ENCODE measurements at regions of chr12 and their contacts with region 1.

Region 1: GRCh38 chr12:12837025-12837872 is 24.1 kb downstream of the DDX47 start:
- DNase-seq: peak; percentile 37
- ATAC-seq: peak; percentile 69
- H3K4me3 ChIP-seq: no peak overlapping the region
- H3K27ac ChIP-seq: no peak overlapping the region
- H3K4me1 ChIP-seq: no peaks in the 10 kb centered on the region
- H3K27me3 ChIP-seq: no peaks in the 10 kb centered on the region
- CTCF ChIP-seq: peak; percentile 59
- EP300 ChIP-seq: no peak
- POLR2A ChIP-seq: no peak
- RAD21 ChIP-seq: no peak

Region 2: DNA sequence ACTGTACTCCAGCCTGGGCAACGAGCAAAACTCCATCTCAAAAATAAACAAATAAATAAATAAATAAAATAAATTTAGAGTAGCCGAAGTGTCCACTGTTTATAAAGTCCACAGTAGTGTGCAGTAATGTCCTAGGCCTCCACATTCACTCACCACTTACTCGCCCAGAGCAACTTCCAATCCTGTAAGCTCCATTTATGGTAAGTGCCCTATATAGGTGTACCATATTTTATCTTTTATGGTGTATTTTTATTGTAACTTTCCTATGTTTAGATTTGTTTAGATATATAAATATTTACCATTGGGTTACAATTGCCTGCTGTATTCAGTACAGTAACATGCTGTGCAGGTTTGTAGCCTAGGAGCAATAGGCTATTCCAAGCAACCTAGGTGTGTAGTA is 16.2 kb after region 1 on chr12:
- CTCF ChIA-PET with region 1: no interaction called
- POLR2A ChIA-PET with region 1: no interaction called
- in situ Hi-C with region 1: no loop called
- intact Hi-C with region 1: no loop called
- DNase-seq: no peak
- ATAC-seq: no peak
- H3K4me3 ChIP-seq: no peak overlapping the region
- H3K27ac ChIP-seq: no peak overlapping the region
- H3K4me1 ChIP-seq: no peaks in the 10 kb centered on the region
- H3K27me3 ChIP-seq: no peaks in the 10 kb centered on the region
- CTCF ChIP-seq: no peak
- EP300 ChIP-seq: no peak
- POLR2A ChIP-seq: no peak
- RAD21 ChIP-seq: no peak

Region 3: GRCh38 chr12:12872139-12872881 is 35.1 kb after region 1 on chr12:
- CTCF ChIA-PET with region 1: no interaction called
- POLR2A ChIA-PET with region 1: no interaction called
- in situ Hi-C with region 1: loop called (anchors 5 kb)
- intact Hi-C with region 1: no loop called
- DNase-seq: peak; percentile 46
- ATAC-seq: peak; percentile 54
- H3K4me3 ChIP-seq: no peak overlapping the region
- H3K27ac ChIP-seq: no peak overlapping the region
- H3K4me1 ChIP-seq: peaks cover 17% of the 10 kb centered on the region
- H3K27me3 ChIP-seq: no peaks in the 10 kb centered on the region; a peak in 1 of 5 replicates
- CTCF ChIP-seq: no peak
- EP300 ChIP-seq: no peak; a peak in 1 of 4 replicates
- POLR2A ChIP-seq: no peak
- RAD21 ChIP-seq: no peak

Region 4: GRCh38 chr12:12890815-12891645 is 53.8 kb after region 1 on chr12 and contains the start of gene GPRC5A:
- CTCF ChIA-PET with region 1: no interaction called
- POLR2A ChIA-PET with region 1: no interaction called
- in situ Hi-C with region 1: no loop called
- intact Hi-C with region 1: loop called (anchors 5 kb)
- DNase-seq: peak; percentile 30
- ATAC-seq: peak; percentile 92
- H3K4me3 ChIP-seq: peak within 1 kb of the TSS; percentile 48 to 71 (median 52)
- H3K27ac ChIP-seq: no peak within 1 kb of the TSS
- H3K4me1 ChIP-seq: peaks cover 19% of the 10 kb centered on the region; the same call in 1 of the 2 replicates
- H3K27me3 ChIP-seq: peaks cover 6 to 56% of the 10 kb centered on the region in 2 experiments; a peak in 4 of 5 replicates
- CTCF ChIP-seq: peak; percentile 61
- EP300 ChIP-seq: no peak
- POLR2A ChIP-seq: no peak
- RAD21 ChIP-seq: no peak
- total RNA-seq, gene GPRC5A: 0.24 and 0.27 TPM in 2 replicates

Region 5: GRCh38 chr12:12975322-12976077 is 138.3 kb after region 1 on chr12:
- CTCF ChIA-PET with region 1: no interaction called
- POLR2A ChIA-PET with region 1: no interaction called
- in situ Hi-C with region 1: no loop called
- intact Hi-C with region 1: loop called (anchors 5 kb)
- DNase-seq: peak; percentile 41
- ATAC-seq: peak; percentile 90
- H3K4me3 ChIP-seq: no peak overlapping the region
- H3K27ac ChIP-seq: no peak overlapping the region
- H3K4me1 ChIP-seq: no peaks in the 10 kb centered on the region
- H3K27me3 ChIP-seq: no peaks in the 10 kb centered on the region
- CTCF ChIP-seq: peak; percentile 75
- EP300 ChIP-seq: no peak
- POLR2A ChIP-seq: no peak
- RAD21 ChIP-seq: peak; percentile 25; the same call in 1 of the 2 replicates

Measured in HepG2 (cell line).